GM10248 (cell line): ENCODE measurements at regions of chr16 and their contacts with region 1.

Region 1: GRCh38 chr16:23416816-23417215 is 36.2 kb downstream of the COG7 start:
- DNase-seq: no peak
- CTCF ChIP-seq: no peak

Region 2: GRCh38 chr16:23398987-23399805 is 17.6 kb before region 1 on chr16:
- CTCF ChIA-PET with region 1: interaction called, 11 read pairs
- POLR2A ChIA-PET with region 1: no interaction called
- DNase-seq: no peak
- CTCF ChIP-seq: no peak